Naive thymus-derived CD4-positive, alpha-beta T cell (primary cell): ENCODE measurements at regions of chr11 and their contacts with region 1.

Region 1: DNA sequence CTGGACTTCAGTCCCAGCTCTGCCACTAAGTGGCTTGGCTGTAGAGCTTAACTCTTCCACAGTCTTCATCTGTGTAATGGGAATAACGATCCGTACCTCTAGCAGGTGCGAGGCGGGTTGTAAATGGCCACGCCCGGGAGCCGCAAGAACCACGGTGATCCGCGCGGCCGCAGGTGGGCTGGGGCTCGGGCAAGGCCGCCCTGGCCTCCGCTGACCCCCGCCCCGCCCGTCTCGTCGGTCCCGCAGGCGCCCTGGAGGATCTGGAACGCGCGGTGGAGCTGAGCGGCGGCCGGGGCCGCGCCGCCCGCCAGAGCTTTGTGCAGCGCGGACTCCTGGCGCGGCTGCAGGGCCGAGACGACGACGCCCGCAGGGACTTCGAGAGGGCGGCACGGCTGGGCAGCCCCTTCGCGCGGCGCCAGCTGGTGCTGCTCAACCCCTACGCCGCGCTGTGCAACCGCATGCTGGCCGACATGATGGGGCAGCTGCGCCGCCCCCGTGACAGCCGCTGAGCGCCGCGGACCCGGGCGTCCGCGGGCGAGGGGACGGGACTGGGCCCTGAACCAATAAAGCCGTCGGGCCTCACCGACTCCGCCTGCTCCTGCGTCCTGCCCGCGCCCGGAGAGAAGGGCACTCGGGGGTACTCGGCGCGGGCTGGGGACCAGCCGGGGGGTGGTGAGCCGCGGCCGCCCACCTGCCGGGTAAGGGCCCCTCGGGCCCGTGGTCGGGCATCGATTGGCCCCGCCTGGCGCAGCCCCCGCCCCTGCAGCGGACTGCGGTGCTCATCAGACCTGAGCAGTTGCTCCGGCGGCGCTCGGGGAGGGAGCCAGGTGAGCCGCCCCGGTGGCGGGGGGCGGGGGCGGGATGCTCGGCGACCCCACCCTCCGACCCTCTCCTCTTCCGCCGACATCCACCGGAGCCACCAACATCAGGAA is at the start of gene TMEM25:
- DNase-seq: peak; percentile 55 to 82 (median 73)
- ATAC-seq: peak; percentile 90
- H3K4me3 ChIP-seq: peak within 1 kb of the TSS; percentile 83
- H3K4me3 Mint-ChIP-seq: peak within 1 kb of the TSS; percentile 92 to 99 (median 94)
- H3K27ac ChIP-seq: peak within 1 kb of the TSS; percentile 83
- H3K27ac Mint-ChIP-seq: peak within 1 kb of the TSS; percentile 82 to 96 (median 91)
- H3K4me1 ChIP-seq: peaks cover 13 to 14% of the 10 kb centered on the region in 2 donors
- H3K4me1 Mint-ChIP-seq: peaks cover 24 to 51% (median 45%) of the 10 kb centered on the region in 7 donors
- H3K27me3 ChIP-seq: no peaks in the 10 kb centered on the region
- H3K27me3 Mint-ChIP-seq: peaks cover 0 to 3% (median 0%) of the 10 kb centered on the region in 5 donors
- total RNA-seq, gene TMEM25: 12.1 to 32.8 (median 27.6) TPM

Region 2: GRCh38 chr11:118418770-118419169 is 111.9 kb before region 1 on chr11:
- CTCF ChIA-PET with region 1: no interaction called
- POLR2A ChIA-PET with region 1: no interaction called
- intact Hi-C with region 1: no loop called
- DNase-seq: no peak
- ATAC-seq: no peak
- H3K4me3 ChIP-seq: no peak overlapping the region
- H3K4me3 Mint-ChIP-seq: no peak overlapping the region
- H3K27ac ChIP-seq: no peak overlapping the region
- H3K27ac Mint-ChIP-seq: no peak overlapping the region
- H3K4me1 ChIP-seq: no peaks in the 10 kb centered on the region
- H3K4me1 Mint-ChIP-seq: peaks cover 0 to 6% (median 0%) of the 10 kb centered on the region in 7 donors
- H3K27me3 ChIP-seq: no peaks in the 10 kb centered on the region
- H3K27me3 Mint-ChIP-seq: no peaks in the 10 kb centered on the region

Region 3: DNA sequence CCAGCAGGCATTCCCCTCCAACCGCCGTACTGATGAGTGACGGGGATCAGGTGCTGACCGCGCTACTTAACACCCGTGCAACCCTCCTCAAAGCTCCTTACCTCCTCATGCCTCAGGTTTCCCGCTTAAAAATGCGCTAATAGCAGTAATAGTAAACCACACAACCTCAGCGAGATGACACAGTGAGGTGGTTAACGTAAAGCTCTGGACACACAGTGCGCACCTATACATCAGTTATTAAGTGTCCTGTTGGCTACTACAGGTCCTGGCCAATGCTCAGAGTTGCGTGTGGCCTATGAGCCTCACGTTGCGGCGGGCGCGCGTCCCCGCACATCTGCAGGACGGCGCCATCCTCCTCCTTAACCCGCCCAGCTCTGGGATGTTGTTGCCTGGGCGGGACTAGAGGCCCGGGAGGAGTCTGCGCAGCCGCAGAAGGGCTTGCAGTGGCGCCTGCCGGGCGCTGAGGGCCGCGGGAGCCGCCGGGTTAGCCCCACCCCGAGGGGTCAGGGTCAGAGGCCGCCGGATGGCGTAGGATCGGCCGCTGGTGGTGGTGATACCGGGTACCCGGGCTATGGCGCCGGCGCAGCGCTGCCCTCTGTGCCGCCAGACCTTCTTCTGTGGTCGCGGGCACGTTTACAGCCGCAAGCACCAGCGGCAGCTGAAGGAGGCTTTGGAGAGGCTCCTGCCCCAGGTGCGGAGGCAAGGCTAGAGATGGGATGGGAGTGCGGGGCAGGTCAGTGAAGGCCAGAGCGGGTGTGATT is 467.1 kb after region 1 on chr11 and contains the start of gene CENATAC:
- CTCF ChIA-PET with region 1: no interaction called
- POLR2A ChIA-PET with region 1: no interaction called
- intact Hi-C with region 1: loop called in 1 of 2 experiments (anchors 1 kb)
- DNase-seq: peak; percentile 91 to 98 (median 94)
- ATAC-seq: peak; percentile 98
- H3K4me3 ChIP-seq: peak within 1 kb of the TSS; percentile 91
- H3K4me3 Mint-ChIP-seq: peak within 1 kb of the TSS; percentile 87 to 99 (median 94)
- H3K27ac ChIP-seq: peak within 1 kb of the TSS; percentile 85
- H3K27ac Mint-ChIP-seq: peak within 1 kb of the TSS; percentile 87 to 98 (median 92)
- H3K4me1 ChIP-seq: peaks cover 6 to 16% of the 10 kb centered on the region in 2 donors
- H3K4me1 Mint-ChIP-seq: peaks cover 26 to 45% (median 37%) of the 10 kb centered on the region in 7 donors
- H3K27me3 ChIP-seq: no peaks in the 10 kb centered on the region
- H3K27me3 Mint-ChIP-seq: no peaks in the 10 kb centered on the region
- total RNA-seq, gene CENATAC: 53.5 to 136 (median 109) TPM